Ascending aorta (tissue), 2 donors: ENCODE measurements at regions of chr1 and their contacts with region 1.

Region 1: DNA sequence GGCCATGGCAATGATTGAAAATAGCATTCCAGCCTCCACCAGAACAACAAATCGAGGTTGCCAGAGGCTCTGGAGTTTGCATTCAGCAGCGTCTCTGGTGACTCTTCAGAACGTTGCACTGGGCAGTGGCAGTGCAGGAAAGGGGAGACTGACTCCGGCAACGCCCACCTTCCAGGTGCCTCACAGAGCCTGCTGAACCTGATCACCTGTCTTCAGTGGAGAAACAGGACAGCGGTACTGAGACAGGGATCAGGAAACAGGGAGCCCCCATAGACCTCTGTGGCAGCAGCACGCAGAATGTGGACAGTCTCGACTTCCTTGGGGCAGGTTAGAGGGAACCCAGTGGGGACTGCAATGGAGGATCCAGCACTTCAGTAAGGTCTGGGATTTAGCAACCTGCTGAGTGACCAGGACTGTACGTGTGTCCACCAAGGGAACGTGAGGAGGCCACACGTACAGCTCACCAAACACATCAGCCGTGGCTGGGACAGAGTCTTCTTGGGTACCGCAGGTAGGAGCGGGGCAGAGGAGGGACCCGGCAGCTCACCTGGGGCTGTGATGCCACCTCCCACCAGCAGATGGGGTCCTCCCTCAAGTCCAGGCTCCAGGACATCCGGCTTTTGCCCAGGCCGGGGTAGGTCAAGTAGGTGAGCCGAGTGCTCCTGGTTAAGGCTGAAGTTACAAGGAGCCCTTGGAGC is 128.6 kb downstream of the PRDM2 start:
- DNase-seq: no peak
- H3K4me3 ChIP-seq: no peak overlapping the region
- H3K27ac ChIP-seq: no peak overlapping the region
- H3K4me1 ChIP-seq: no peaks in the 10 kb centered on the region
- H3K27me3 ChIP-seq: no peaks in the 10 kb centered on the region
- CTCF ChIP-seq: peak in 2 of 3 experiments; percentile 30 to 48

Region 2: DNA sequence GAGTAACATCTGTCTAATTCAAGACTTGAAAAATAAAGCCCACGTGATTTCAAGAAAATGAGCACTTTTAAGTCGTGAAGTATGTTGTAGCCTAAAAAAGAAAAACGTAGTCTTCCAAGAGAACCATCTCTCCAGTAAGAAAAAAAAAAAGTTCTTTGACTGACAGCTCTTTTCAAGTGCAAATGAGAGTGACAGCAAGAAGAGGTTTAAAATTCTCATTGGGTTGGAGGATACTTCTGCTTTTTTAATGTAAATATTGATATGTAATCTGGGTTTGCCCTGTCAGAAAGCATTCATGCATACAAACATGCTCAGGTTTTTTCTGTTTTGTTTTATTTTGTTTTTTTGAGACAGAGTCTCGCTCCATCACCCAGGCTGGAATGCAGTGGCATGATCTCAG is 160.9 kb before region 1 on chr1:
- intact Hi-C with region 1: loop called (anchors 5 kb)
- DNase-seq: no peak
- H3K4me3 ChIP-seq: no peak overlapping the region
- H3K27ac ChIP-seq: no peak overlapping the region
- H3K4me1 ChIP-seq: no peaks in the 10 kb centered on the region
- H3K27me3 ChIP-seq: no peaks in the 10 kb centered on the region
- CTCF ChIP-seq: no peak

Region 3: DNA sequence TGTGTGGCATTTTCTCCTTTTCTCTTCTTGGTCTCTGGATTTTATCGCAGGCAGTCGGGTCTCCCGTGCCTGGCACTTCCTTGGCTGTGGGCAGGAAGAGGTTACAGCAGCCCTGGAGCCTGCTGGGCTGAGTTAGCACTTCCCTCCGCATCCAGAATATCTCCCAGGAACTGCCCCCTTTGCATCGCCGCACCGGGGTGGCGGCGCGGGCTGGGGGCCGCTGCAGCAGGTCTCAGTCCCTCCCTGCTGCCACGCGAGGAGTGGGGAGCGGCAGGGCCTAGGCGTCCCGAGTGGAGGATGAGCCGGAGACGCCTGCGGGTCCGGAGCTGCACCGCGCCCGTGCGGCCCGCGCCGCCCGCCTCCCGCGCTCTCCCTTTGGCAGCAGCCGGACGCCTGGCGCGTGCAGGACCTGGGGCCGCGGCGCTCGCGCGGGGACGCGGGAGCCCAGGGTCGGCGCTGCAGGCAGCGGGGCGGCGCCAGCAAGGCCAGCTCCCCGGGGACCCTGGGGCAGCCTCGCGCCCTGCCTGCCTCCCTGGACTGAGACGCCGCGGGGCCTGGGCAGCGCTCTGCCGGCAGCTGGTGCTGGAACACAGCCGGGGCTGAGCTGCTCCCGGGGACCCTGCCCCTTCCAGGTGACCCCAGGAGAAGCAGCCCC is 64.2 kb after region 1 on chr1:
- intact Hi-C with region 1: no loop called
- DNase-seq: no peak
- H3K4me3 ChIP-seq: peak overlapping the region; percentile 47 to 75
- H3K27ac ChIP-seq: no peak overlapping the region
- H3K4me1 ChIP-seq: peaks cover 0 to 6% of the 10 kb centered on the region in 2 donors
- H3K27me3 ChIP-seq: no peaks in the 10 kb centered on the region
- CTCF ChIP-seq: no peak

Region 4: GRCh38 chr1:13948888-13949391 is 120.3 kb after region 1 on chr1:
- intact Hi-C with region 1: loop called (anchors 10 kb)
- DNase-seq: peak in 1 of 2 donors; percentile 71
- H3K4me3 ChIP-seq: no peak overlapping the region
- H3K27ac ChIP-seq: peak overlapping the region; percentile 24 to 46
- H3K4me1 ChIP-seq: no peaks in the 10 kb centered on the region
- H3K27me3 ChIP-seq: no peaks in the 10 kb centered on the region
- CTCF ChIP-seq: no peak

Region 5: GRCh38 chr1:13960375-13960987 is 131.9 kb after region 1 on chr1:
- intact Hi-C with region 1: loop called (anchors 5 kb)
- DNase-seq: peak in 1 of 2 donors; percentile 73
- H3K4me3 ChIP-seq: no peak overlapping the region
- H3K27ac ChIP-seq: no peak overlapping the region
- H3K4me1 ChIP-seq: no peaks in the 10 kb centered on the region
- H3K27me3 ChIP-seq: no peaks in the 10 kb centered on the region
- CTCF ChIP-seq: peak; percentile 89 to 98 (median 96)